Common myeloid progenitor, CD34-positive (primary cell): ENCODE measurements at regions of chr18 and their contacts with region 1.

Region 1: DNA sequence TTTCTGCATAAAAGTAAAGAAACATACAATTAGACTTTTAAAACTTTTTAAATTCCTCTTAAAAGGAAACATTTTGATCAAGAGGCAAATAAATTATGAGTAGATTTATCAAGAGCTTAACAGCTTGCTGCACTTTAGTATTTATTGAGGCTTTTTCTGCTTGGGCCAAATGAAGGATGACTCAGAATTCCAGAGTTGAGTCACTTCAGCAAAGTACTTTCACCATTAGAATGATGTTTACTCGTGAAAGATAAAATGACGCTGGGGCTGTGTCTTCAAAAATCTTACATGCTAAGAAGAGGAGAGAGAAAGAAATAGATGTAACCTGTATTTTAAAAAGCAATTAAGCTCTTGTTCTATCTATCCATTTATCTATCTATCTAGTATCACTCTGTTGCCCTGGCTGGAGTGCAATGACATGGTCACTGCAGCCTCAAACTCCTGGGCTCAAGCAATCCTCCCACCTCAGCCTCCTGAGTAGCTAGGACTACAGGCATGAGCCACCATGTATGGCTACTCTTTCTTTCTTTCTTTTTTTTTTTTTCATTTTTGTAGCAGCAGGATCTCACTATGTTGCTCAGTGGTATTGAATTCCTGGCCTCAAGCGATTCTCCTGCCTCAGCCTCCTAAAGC is 75.3 kb upstream of the RIOK3 start:
- DNase-seq: peak in 2 of 3 donors; percentile 31
- H3K4me3 ChIP-seq: no peak overlapping the region
- H3K27ac ChIP-seq: no peak overlapping the region
- H3K4me1 ChIP-seq: no peaks in the 10 kb centered on the region
- H3K27me3 ChIP-seq: no peaks in the 10 kb centered on the region

Region 2: GRCh38 chr18:23032030-23032582 is 345.7 kb before region 1 on chr18:
- CTCF ChIA-PET with region 1: interaction called, 14 read pairs
- POLR2A ChIA-PET with region 1: no interaction called
- DNase-seq: no peak
- H3K4me3 ChIP-seq: no peak overlapping the region
- H3K27ac ChIP-seq: no peak overlapping the region
- H3K4me1 ChIP-seq: no peaks in the 10 kb centered on the region
- H3K27me3 ChIP-seq: no peaks in the 10 kb centered on the region

Region 3: DNA sequence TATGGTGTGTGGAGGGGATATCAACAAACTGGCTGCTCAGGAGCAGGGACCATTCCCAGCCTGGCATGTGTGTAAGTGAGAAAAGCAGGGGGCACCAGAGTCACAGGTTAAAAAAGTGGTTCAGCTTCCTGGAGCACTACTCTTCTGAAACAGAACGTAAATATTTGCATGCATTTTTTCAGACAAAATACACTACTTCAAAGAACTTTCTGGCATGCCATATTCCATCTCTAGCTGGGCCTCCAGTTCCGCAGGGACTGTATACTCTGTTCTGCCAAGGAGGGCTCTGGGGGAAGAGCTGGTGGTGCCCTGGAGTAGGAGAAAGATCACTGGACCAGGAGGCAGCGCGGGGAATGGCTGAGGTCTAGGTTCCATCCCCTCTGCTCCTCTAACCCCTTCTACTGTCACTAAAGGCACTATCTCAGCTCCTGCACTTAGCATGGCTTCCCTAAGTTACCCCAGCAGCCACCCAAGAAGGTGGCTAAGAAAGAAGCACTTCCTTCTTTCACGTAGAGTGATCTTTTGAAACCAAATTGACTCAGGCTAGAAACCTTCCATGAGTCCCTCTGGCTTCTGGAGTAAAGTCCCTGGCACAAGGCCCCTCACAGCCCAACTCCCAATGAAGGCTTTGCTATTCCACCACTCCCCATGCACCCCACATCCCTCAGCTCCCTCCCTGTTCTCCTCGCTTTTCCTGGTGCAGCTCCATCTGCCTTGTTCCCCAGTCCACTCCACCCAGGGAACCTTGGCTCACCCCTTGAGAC is 300.1 kb before region 1 on chr18:
- CTCF ChIA-PET with region 1: interaction called, 14 read pairs
- POLR2A ChIA-PET with region 1: no interaction called
- DNase-seq: peak in 2 of 3 donors; percentile 43 to 45
- H3K4me3 ChIP-seq: no peak overlapping the region
- H3K27ac ChIP-seq: no peak overlapping the region
- H3K4me1 ChIP-seq: peaks cover 10 to 24% (median 13%) of the 10 kb centered on the region in 4 experiments
- H3K27me3 ChIP-seq: no peaks in the 10 kb centered on the region

Region 4: GRCh38 chr18:23126376-23127056 is 251.3 kb before region 1 on chr18:
- CTCF ChIA-PET with region 1: interaction called, 12 read pairs
- POLR2A ChIA-PET with region 1: no interaction called
- DNase-seq: no peak
- H3K4me3 ChIP-seq: no peak overlapping the region
- H3K27ac ChIP-seq: no peak overlapping the region
- H3K4me1 ChIP-seq: peaks cover 0 to 3% (median 0%) of the 10 kb centered on the region in 4 experiments
- H3K27me3 ChIP-seq: no peaks in the 10 kb centered on the region

Region 5: DNA sequence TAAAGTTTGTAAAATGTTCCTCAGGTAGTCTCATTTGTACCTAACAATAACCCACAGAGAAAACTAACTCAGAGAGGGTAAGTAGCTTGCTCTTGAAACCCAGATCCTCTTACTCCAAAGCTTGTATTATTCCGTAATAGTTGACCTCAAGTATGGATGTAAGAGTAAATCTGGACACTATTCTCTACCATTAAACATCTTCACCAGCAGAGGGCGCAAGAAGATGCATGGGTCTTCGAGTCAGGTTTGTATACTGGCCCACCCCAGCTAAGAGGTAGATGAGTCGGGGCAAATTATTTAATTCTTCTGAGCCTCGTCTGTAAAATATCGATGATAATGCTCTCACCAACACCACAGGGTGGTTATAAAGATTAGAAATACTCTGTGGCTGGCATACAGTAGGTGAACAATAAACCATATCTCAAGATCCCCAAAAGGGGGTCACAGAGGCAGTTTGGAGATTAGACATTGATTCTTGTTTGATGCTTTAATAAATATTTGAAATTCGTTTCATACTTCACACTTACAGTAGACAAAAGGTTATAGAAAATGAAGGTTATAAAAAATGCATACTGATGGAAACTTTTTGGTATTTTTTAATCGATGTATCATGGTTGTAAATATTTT is 246.0 kb before region 1 on chr18:
- CTCF ChIA-PET with region 1: interaction called, 12 read pairs
- POLR2A ChIA-PET with region 1: interaction called, 5 read pairs
- DNase-seq: peak; percentile 79 to 87 (median 82)
- H3K4me3 ChIP-seq: no peak overlapping the region
- H3K27ac ChIP-seq: no peak overlapping the region
- H3K4me1 ChIP-seq: peaks cover 11 to 21% (median 16%) of the 10 kb centered on the region in 4 experiments
- H3K27me3 ChIP-seq: no peaks in the 10 kb centered on the region

Region 6: GRCh38 chr18:23317975-23318675 is 59.7 kb before region 1 on chr18:
- CTCF ChIA-PET with region 1: no interaction called
- POLR2A ChIA-PET with region 1: no interaction called
- DNase-seq: peak in 1 of 3 donors; percentile 43
- H3K4me3 ChIP-seq: no peak overlapping the region
- H3K27ac ChIP-seq: no peak overlapping the region
- H3K4me1 ChIP-seq: peaks cover 0 to 12% (median 4%) of the 10 kb centered on the region in 4 experiments
- H3K27me3 ChIP-seq: no peaks in the 10 kb centered on the region

Region 7: GRCh38 chr18:23356915-23357601 is 20.7 kb before region 1 on chr18:
- CTCF ChIA-PET with region 1: interaction called, 12 read pairs
- POLR2A ChIA-PET with region 1: no interaction called
- DNase-seq: no peak
- H3K4me3 ChIP-seq: no peak overlapping the region
- H3K27ac ChIP-seq: no peak overlapping the region
- H3K4me1 ChIP-seq: peaks cover 2 to 46% (median 31%) of the 10 kb centered on the region in 4 experiments
- H3K27me3 ChIP-seq: no peaks in the 10 kb centered on the region

Region 8: DNA sequence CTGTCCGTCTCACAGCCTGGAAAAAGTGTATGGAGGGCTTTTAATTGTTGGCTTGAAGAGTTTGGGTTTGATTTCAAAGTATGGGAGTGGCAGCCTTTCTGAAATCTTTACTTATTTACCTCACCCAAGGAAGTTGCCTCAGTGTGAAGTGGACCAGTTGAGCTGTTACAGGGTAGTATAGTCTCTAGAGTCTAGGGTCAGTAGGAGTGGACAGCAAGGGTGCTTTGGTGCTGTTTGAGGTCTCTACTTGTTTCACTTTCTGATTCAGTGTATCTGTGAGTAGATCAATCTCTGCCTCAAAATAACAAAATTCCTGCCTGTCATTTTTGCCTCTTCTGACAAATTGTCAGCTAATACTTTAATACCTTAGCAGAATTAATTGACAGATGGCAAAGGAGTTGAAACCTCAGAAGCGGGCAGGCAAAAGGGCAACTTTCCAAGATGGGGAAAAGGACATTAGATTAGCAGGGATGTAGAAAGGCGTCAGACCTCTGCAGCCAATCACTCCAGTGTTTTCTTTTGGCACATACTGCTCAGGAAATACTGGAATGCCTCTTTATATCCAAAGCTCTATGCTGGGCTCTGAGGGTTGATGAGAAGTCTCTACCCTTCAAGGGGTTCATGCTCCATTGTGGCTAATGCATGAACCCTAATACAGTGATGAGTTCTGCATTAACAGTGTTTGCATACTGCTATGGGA is 81.2 kb after region 1 on chr18:
- CTCF ChIA-PET with region 1: no interaction called
- POLR2A ChIA-PET with region 1: no interaction called
- DNase-seq: no peak
- H3K4me3 ChIP-seq: no peak overlapping the region
- H3K27ac ChIP-seq: no peak overlapping the region
- H3K4me1 ChIP-seq: peaks cover 10 to 28% (median 13%) of the 10 kb centered on the region in 4 experiments
- H3K27me3 ChIP-seq: no peaks in the 10 kb centered on the region